ENCODE measurements at regions of chr10 and their contacts with region 1.

Region 1: DNA sequence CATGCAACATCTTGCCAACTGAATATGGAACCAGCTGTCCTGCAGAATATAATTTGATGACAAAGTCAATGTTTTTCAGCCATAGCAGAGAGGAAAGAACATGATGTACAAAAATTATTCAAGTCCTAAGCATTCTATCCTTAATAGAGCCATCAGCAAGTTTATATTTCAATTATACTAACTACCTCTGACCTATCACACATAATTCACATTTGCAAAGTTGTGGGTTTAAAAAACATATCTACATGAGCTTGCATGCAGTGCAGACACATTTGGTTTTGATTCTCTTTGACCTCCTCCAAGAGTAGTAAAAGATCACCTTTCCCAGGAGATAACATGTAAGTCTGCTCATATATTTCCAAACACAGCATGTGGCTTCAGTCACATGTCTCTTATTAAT is 126.0 kb upstream of the FGFR2 start:
- DNase-seq: no peak
- ATAC-seq: no peak
- H3K4me3 ChIP-seq: no peak overlapping the region
- H3K27ac ChIP-seq: no peak overlapping the region
- H3K4me1 ChIP-seq: no peaks in the 10 kb centered on the region
- CTCF ChIP-seq: no peak
- EP300 ChIP-seq: no peak
- POLR2A ChIP-seq: no peak
- RAD21 ChIP-seq: no peak

Region 2: GRCh38 chr10:121596689-121597503 is 127.4 kb before region 1 on chr10:
- CTCF ChIA-PET with region 1: no interaction called
- POLR2A ChIA-PET with region 1: no interaction called
- DNase-seq: no peak
- ATAC-seq: peak in 1 of 2 experiments; percentile 9; a peak in 1 of 6 replicates
- H3K4me3 ChIP-seq: peak overlapping the region; percentile 54
- H3K27ac ChIP-seq: no peak overlapping the region
- H3K4me1 ChIP-seq: peaks cover 14% of the 10 kb centered on the region; the same call in 2 of the 3 replicates
- CTCF ChIP-seq: no peak
- EP300 ChIP-seq: no peak
- POLR2A ChIP-seq: no peak
- RAD21 ChIP-seq: no peak

Region 3: GRCh38 chr10:121734589-121735045 is 10.3 kb after region 1 on chr10:
- CTCF ChIA-PET with region 1: interaction called, 20 read pairs
- POLR2A ChIA-PET with region 1: no interaction called
- DNase-seq: peak; percentile 12 to 44
- ATAC-seq: peak; percentile 58 to 78; a peak in 4 of 6 replicates
- H3K4me3 ChIP-seq: peak overlapping the region; percentile 16; the same call in 2 of the 3 replicates
- H3K27ac ChIP-seq: no peak overlapping the region
- H3K4me1 ChIP-seq: peaks cover 4% of the 10 kb centered on the region; the same call in 2 of the 3 replicates
- CTCF ChIP-seq: peak; percentile 92
- EP300 ChIP-seq: no peak
- POLR2A ChIP-seq: no peak
- RAD21 ChIP-seq: peak; percentile 62 to 70

Region 4: GRCh38 chr10:121994390-121994961 is 270.2 kb after region 1 on chr10:
- CTCF ChIA-PET with region 1: no interaction called
- POLR2A ChIA-PET with region 1: no interaction called
- DNase-seq: no peak
- ATAC-seq: peak in 1 of 2 experiments; percentile 31; a peak in 2 of 6 replicates
- H3K4me3 ChIP-seq: no peak overlapping the region
- H3K27ac ChIP-seq: no peak overlapping the region
- H3K4me1 ChIP-seq: no peaks in the 10 kb centered on the region
- CTCF ChIP-seq: no peak
- EP300 ChIP-seq: no peak
- POLR2A ChIP-seq: no peak
- RAD21 ChIP-seq: no peak

Region 5: DNA sequence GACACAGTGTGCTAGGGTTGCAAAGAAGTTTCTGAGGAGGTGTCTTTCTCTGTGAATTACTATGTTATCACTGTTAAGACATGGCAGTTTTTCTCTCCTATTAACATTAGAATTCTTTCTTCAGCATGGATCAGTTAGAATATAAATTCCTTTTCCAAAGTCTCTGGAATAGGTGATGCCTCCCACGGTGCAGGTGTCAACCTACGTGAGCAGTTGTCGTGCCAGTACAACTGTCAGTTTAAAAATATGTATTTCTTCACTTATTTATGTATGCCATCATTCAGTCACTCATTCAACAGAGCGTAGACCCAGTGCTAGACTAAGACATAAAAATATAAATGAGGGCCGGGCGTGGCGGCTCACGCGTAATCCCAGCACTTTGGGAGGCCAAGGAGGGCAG is 348.2 kb after region 1 on chr10:
- CTCF ChIA-PET with region 1: no interaction called
- POLR2A ChIA-PET with region 1: no interaction called
- DNase-seq: no peak
- ATAC-seq: no peak
- H3K4me3 ChIP-seq: no peak overlapping the region
- H3K27ac ChIP-seq: peak overlapping the region; percentile 93 to 94; a peak in 5 of 6 replicates
- H3K4me1 ChIP-seq: peaks cover 46% of the 10 kb centered on the region
- CTCF ChIP-seq: no peak
- EP300 ChIP-seq: no peak
- POLR2A ChIP-seq: no peak
- RAD21 ChIP-seq: no peak